Activated CD8-positive, alpha-beta T cell treated with anti-CD3 and anti-CD28 coated beads for 36 hours (primary cell): ENCODE measurements at regions of chr6 and their contacts with region 1.

Region 1: DNA sequence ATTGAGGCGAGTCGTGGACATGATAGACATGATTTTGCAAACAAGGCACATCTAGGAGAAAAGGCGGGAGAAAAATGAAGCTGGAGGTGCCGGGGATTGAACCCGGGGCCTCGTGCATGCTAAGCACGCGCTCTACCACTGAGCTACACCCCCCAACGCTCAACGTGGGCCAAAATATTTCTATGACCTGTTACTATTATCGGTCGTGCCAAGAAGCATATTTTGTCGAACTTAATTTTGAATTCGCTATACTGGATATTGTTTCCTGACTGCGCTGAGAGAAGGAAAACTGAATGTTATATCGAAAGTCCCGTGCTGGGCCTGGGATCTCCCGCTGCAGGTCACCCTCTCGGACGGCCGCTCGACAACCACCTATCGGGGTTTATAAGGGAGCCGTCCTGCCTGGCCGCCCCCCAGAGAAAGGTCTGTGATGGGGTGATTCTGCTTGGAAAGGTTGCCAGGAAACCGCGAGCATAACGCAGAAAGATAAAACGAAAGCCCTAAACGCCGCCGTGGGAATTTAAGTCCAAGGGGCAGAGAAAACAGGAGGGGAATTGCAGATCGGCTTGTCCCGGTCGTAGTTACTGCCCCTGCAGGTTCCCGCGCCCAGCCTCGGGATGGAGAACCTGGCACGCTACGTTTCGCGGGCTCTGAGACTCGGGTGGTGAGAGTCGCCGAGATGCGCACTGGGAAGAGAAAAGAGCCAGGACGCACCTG is 60.0 kb downstream of the TRIM27 start:
- DNase-seq: peak; percentile 89
- ATAC-seq: peak; percentile 54
- H3K4me3 Mint-ChIP-seq: peak overlapping the region; percentile 89
- H3K27ac Mint-ChIP-seq: peak overlapping the region; percentile 84
- H3K4me1 Mint-ChIP-seq: peaks cover 30% of the 10 kb centered on the region
- H3K27me3 Mint-ChIP-seq: peaks cover 3% of the 10 kb centered on the region
- CTCF ChIP-seq: no peak

Region 2: GRCh38 chr6:28769626-28770402 is 93.9 kb before region 1 on chr6:
- CTCF ChIA-PET with region 1: no interaction called
- POLR2A ChIA-PET with region 1: no interaction called
- intact Hi-C with region 1: no loop called
- DNase-seq: no peak
- ATAC-seq: no peak
- H3K4me3 Mint-ChIP-seq: no peak overlapping the region
- H3K27ac Mint-ChIP-seq: no peak overlapping the region
- H3K4me1 Mint-ChIP-seq: peaks cover 5% of the 10 kb centered on the region
- H3K27me3 Mint-ChIP-seq: peaks cover 96% of the 10 kb centered on the region
- CTCF ChIP-seq: no peak

Region 3: DNA sequence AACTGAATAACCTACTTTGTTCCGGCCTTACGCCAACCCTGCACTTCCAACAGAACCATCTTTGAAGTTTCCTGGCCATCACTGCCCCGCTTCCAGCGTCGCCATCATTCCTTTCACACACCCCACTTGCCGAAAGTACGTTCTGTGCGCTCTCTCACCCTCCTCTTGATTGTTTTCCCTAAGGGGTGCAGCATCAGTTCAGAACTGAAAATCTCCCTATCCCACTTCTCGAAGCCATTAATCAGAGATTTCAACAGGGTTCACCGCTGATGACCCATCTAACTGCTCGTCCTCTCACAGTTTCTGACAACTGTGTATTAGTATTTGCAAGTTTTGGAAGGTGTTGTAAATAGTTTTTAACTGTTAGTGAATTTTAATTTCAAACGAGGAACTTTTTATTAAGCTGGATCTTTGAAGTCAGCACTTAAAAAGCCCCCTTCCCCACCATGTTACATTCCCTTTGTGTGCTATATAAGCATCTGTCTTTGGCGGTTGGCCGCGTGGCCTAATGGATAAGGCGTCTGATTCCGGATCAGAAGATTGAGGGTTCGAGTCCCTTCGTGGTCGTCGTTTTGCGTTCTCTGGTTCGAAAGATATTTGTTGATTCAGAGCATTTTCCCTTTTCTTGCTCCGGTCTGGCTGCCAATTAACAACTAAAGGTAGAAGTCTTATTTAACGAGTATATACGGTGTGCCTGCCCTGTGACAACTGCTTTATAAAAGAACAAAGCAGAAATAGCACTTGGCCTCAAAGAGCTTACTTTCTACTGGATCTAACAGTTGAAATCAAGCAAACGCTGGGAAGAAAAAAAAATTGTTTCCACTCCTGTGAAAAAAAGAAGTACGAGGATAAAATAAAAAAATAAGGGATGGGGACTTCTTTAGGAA is 17.4 kb after region 1 on chr6:
- CTCF ChIA-PET with region 1: interaction called, 4 read pairs
- POLR2A ChIA-PET with region 1: interaction called, 62 read pairs
- intact Hi-C with region 1: loop called (anchors 1 kb)
- DNase-seq: peak; percentile 82
- ATAC-seq: no peak
- H3K4me3 Mint-ChIP-seq: peak overlapping the region; percentile 81
- H3K27ac Mint-ChIP-seq: peak overlapping the region; percentile 77
- H3K4me1 Mint-ChIP-seq: peaks cover 45% of the 10 kb centered on the region
- H3K27me3 Mint-ChIP-seq: peaks cover 1% of the 10 kb centered on the region
- CTCF ChIP-seq: no peak

Region 4: GRCh38 chr6:28906669-28907068 is 42.9 kb after region 1 on chr6:
- CTCF ChIA-PET with region 1: no interaction called
- POLR2A ChIA-PET with region 1: no interaction called
- intact Hi-C with region 1: no loop called
- DNase-seq: no peak
- ATAC-seq: no peak
- H3K4me3 Mint-ChIP-seq: no peak overlapping the region
- H3K27ac Mint-ChIP-seq: peak overlapping the region; percentile 51
- H3K4me1 Mint-ChIP-seq: peaks cover 12% of the 10 kb centered on the region
- H3K27me3 Mint-ChIP-seq: no peaks in the 10 kb centered on the region
- CTCF ChIP-seq: no peak

Region 5: DNA sequence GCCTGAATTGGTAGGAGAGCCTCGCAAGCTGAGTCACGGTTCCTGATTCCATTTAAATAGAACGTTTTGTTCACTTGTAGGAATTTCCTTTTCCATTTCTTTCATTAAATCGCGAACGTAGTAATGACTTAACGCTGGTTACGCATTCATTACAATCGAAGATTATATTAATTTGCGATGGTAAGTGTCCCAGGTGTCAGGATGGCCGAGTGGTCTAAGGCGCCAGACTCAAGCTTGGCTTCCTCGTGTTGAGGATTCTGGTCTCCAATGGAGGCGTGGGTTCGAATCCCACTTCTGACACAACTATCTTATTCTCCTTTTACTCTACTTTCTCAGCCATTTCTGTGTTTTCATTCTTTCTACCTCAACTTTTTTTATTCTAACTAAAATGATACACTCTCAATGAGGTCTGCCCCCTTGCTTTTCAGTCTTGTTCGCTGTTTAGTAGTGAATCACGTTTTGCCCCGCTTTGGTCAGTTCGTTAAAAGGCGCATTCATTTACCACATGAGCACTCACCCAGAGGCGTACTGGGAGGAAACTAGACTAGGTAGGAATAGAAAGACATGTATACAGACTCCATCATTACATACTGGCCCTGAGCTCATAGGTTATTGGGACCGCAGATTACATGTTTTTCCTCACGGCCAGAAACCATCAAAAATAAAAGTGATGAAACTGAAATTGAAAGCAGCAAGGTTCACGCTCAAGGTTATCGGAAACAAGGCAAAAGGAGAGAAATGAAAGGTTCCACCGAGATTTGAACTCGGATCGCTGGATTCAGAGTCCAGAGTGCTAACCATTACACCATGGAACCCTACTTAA is 77.3 kb after region 1 on chr6:
- CTCF ChIA-PET with region 1: interaction called, 4 read pairs
- POLR2A ChIA-PET with region 1: interaction called, 3 read pairs
- intact Hi-C with region 1: loop called (anchors 2 kb)
- DNase-seq: peak; percentile 89
- ATAC-seq: peak; percentile 69
- H3K4me3 Mint-ChIP-seq: peak overlapping the region; percentile 83
- H3K27ac Mint-ChIP-seq: peak overlapping the region; percentile 99
- H3K4me1 Mint-ChIP-seq: peaks cover 40% of the 10 kb centered on the region
- H3K27me3 Mint-ChIP-seq: peaks cover 2% of the 10 kb centered on the region
- CTCF ChIP-seq: no peak

Region 6: GRCh38 chr6:28981833-28982475 is 118.2 kb after region 1 on chr6:
- CTCF ChIA-PET with region 1: no interaction called
- POLR2A ChIA-PET with region 1: no interaction called
- intact Hi-C with region 1: loop called (anchors 10 kb)
- DNase-seq: peak; percentile 77
- ATAC-seq: peak; percentile 48
- H3K4me3 Mint-ChIP-seq: peak overlapping the region; percentile 84
- H3K27ac Mint-ChIP-seq: peak overlapping the region; percentile 91
- H3K4me1 Mint-ChIP-seq: peaks cover 53% of the 10 kb centered on the region
- H3K27me3 Mint-ChIP-seq: peaks cover 38% of the 10 kb centered on the region
- CTCF ChIP-seq: no peak